ENCODE measurements at regions of chrX and their contacts with region 1.

Region 1: DNA sequence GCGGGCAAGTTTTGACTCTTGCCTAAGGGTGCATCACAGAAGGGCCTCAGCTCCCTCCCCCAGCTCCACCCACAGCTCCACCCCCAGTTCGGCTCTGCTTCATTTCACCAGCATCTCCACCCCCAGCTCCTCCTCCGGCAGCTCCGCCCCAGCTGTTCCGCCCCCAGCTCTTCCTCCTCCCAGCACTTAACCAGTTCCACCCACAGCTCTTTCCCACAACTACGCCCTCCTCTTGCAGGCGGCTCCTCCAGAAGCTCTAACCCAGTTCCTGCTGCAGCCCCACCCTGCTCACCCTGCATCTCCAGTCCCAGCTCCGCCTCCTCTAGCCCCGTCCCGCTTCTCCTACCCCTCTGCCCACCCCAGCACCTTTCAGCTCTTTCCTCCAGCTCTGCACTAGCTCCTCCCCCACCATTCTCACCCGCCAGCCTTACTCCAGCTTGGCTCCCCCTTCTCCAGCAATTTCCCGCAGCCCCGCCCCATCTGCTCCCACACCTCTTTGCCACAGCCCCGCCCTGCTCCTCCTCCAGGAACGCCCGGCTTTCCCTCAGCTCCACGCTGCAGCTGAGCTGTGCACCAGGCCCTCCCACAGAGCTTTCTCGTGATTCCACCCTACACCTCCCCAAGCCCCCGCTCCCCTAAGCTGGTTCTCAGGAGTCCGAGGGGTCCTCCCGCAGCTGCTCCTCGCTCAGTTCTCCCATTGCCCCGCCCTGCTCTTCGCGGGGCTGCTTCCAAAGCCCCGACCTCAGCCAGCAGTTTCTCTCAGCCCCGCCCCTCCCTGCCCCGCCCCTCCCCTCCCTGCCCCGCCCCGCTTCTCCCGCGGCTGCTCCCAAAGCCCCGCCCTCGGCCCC is 1.3 kb upstream of the EOLA1 start:
- DNase-seq: peak; percentile 79
- CTCF ChIP-seq: no peak

Region 2: DNA sequence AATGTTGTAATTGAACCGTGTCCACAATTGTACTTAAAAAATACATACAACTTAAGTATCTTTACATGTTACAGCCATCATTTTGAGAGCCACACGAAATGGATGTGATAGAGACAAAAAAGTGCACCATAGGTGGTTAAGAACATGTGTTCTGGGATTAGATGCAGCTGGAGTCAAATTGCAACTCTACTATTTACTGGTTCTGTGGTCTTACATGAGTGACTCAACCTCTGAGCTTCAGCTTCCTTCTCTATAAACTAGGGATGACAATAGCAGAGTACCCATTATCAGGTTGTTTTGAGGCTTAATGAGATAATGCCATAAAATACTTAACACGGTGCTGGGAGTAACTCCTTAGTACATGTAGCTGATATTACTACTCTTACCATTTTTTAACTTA is 164.8 kb before region 1 on chrX:
- CTCF ChIA-PET with region 1: no interaction called
- POLR2A ChIA-PET with region 1: no interaction called
- DNase-seq: no peak
- CTCF ChIP-seq: no peak

Region 3: DNA sequence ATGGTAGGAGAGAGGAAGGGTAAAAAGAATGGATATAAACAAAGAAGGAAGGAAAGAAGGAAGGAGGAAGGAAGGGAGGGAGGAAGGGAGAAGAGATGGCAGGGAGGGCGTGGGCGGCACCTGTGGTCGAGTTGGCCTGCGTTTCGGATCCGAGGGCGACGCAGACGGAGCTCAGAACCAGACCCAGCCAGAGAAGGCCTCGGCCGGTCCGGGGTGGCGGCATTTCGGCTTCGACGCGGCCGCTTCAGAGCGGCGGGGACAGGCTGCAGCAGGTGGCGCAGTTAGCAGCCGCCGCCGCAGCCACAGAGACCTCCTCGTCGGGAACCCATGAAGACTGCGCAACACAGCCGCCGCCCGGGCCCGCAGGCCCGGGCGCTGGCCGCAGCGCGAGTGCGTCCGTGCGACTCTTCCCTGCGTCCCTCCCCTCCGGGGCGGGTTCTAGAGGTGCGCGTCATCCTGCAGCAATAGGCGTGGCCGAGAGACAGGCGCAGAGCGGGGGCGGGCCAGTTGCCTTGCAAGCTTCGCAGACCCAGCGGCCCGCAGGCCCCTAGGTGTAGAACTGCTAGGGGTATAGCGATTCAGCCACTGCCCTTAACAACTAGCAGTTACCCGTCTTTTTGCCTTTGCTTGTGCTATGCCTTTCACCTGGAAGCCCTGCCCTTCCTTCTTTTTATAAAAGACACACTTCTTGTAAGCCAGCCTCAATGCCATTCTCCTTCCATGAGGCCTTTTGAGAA is 34.4 kb before region 1 on chrX and contains the start of gene IDS:
- CTCF ChIA-PET with region 1: no interaction called
- POLR2A ChIA-PET with region 1: interaction called, 17 read pairs
- DNase-seq: peak; percentile 83
- CTCF ChIP-seq: no peak

Region 4: DNA sequence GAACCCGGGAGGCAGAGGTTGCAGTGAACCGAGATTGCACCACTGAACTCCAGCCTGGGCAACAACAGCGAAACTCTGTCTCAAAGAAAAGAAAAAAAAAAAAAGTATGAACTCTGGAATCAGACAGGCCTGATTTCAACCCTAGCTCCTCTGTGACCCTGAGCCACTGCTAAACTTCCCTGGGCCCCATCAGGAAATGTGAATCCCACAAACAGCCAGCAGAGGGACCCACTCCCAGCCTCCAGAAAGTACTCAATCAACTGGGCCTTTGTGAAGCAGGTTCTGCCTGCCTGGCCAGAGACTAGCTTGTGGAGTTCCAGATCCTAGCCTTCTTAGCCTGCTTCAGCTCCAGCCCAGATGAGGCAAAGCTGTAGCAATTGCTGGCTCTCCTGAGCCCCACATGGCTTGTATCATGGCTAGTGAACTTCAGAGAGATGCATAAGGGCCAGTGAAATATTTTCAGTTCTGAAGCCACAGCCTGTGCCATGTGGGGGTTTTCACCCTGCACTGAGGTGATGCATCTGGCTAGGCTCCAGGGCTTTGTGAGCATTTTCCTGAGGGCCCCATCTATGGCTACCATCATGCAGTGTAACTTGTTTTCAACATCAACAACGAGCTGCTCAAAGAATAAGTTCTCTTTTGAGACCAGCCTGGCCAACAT is 27.2 kb before region 1 on chrX:
- CTCF ChIA-PET with region 1: interaction called, 11 read pairs
- POLR2A ChIA-PET with region 1: no interaction called
- DNase-seq: peak; percentile 46
- CTCF ChIP-seq: peak; percentile 45

Region 5: GRCh38 chrX:149938427-149939270 is 399.1 kb after region 1 on chrX and contains the start of gene EOLA2:
- CTCF ChIA-PET with region 1: interaction called, 6 read pairs
- POLR2A ChIA-PET with region 1: interaction called, 30 read pairs
- DNase-seq: peak; percentile 64
- CTCF ChIP-seq: peak; percentile 48